ENCODE measurements at regions of chr18 and their contacts with region 1.

Region 1: DNA sequence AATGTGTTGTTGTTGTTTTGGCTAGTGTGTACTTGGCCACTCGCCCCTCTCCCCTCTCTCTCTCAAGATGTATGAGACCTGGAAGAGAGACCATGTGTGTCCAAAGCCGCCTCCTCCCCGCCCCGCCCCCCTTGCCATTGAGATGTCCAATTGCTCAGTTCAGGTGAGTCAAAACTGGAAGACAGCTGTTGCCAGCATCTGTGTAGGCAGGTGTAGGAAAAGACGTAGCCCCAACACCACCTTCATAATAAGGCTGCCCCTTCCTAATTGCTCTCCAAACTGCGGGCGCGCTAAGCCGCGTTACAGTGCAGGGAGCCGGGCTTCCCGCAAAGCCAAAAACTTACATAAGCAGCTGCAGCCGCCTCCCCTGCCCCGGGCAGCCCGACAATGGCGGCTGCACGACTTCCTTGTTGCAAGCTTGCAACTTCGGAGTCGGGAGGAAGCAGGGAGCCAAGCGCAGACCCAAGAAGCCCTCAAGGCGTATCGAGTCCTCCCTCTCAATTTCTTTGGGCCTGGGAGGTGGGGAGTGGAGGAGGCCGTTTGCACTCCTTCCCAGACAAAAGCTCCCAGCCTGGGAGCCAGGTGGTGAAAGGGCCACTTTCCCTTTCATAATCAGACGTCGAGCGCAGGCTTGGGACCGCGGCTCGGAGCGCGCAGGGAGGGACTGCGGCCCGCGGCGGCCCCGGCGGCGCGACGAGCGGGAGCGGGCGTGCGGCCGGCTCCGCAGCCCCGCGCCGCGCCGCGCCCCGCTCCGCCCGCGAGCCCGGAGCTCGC is 882 bp downstream of the ZBTB14 start:
- DNase-seq: peak; percentile 68 to 83
- ATAC-seq: peak; percentile 18

Region 2: DNA sequence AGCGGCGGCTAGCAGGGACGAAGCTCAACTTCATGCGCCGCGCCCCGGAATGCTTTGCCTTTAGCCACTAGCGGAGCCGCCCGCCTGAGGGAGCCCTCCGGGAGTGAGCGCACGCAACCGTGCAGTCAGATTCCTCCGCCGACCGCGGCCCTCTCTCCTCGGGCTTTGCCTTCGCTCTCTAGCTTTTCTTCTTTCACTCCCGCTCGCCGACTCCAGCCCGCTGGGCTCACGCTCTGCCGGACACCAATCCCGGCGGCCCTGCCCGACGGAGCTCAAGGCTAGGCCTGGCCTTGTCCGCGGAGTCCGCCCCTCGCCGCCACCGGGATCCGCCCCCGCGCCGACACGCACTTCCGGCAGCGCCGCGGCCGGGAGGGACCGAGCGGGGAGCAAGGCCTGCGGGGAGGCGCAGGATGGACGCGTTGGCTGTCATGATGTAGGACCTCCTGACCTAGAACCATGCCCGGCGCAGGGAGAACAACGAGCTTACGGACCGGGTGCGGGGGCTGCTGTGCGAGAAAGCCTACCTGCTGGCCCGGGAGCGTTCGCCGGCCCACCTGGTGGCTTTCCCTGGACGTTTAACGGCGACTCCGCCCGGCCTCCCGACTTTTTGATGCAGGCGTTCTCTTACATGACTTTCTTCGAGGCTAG is 56.8 kb before region 1 on chr18:
- intact Hi-C with region 1: loop called in 1 of 2 experiments (anchors 5 kb)
- DNase-seq: peak; percentile 83 to 92
- ATAC-seq: peak; percentile 94

Region 3: GRCh38 chr18:5370332-5370731 is 75.7 kb after region 1 on chr18:
- intact Hi-C with region 1: no loop called
- DNase-seq: no peak
- ATAC-seq: no peak

Region 4: GRCh38 chr18:5841518-5841917 is 546.9 kb after region 1 on chr18:
- intact Hi-C with region 1: no loop called
- DNase-seq: no peak
- ATAC-seq: no peak

Measured in left colon (tissue), 2 donors.